ENCODE measurements at regions of chrX and their contacts with region 1.

Region 1: DNA sequence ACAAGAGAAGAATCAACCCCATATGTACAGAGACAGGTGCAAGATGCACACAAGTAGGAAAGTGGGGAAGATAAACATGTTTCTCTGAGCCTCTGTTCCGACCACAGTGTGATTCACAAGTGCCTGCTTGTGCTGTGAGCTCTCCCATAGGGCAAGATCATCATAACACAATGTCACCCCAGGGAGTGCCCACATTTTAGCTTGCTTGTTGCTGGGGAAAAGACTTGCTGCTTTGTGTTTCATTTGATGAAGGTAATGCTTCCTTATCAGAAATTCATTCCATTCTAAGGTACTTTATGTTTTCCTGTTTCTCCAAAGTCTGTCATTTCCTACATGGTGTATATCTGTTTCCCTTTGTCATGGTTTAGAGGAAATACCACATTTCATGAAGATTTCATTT is 304.5 kb upstream of the DIPK2B start:
- DNase-seq: no peak
- H3K4me3 ChIP-seq: no peak overlapping the region
- H3K27ac ChIP-seq: peak overlapping the region; percentile 74
- H3K4me1 ChIP-seq: peaks cover 19% of the 10 kb centered on the region
- H3K27me3 ChIP-seq: no peaks in the 10 kb centered on the region
- CTCF ChIP-seq: no peak
- POLR2A ChIP-seq: no peak

Region 2: DNA sequence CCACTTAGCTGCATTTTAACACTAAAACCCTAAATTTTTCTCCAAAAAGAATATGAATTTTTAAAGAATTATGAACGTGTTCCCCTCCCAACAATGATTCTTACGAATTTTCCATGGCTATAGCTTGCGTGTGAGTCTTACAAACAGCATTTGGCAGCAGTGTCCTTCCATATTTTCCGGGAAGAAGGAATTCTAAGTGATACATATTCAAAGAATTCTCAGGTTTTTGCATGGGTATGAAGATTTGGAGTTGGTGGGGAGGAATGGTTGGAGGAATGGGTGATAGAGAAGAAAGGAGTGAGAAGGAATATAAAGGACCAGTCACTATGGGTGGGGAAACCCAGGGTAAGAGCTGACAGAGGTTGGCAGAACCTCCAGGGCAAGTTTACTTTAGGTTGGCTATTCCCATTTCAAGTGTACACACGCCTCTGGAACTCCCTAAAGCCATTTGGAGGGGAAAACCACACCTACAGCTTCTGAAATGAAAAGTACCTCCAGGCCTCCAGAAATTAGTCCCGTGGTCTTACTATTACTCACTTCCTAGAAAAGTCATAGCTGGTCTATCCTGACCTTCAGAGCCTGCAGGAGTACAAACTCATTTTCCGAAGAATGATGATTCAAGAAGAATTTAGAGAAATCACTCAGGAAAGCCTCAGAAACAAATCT is 116.3 kb after region 1 on chrX:
- intact Hi-C with region 1: loop called (anchors 5 kb)
- DNase-seq: no peak
- H3K4me3 ChIP-seq: no peak overlapping the region
- H3K27ac ChIP-seq: peak overlapping the region; percentile 55
- H3K4me1 ChIP-seq: no peaks in the 10 kb centered on the region
- H3K27me3 ChIP-seq: no peaks in the 10 kb centered on the region
- CTCF ChIP-seq: no peak
- POLR2A ChIP-seq: no peak